PC-3 (cell line): ENCODE measurements at regions of chr20 and their contacts with region 1.

Region 1: DNA sequence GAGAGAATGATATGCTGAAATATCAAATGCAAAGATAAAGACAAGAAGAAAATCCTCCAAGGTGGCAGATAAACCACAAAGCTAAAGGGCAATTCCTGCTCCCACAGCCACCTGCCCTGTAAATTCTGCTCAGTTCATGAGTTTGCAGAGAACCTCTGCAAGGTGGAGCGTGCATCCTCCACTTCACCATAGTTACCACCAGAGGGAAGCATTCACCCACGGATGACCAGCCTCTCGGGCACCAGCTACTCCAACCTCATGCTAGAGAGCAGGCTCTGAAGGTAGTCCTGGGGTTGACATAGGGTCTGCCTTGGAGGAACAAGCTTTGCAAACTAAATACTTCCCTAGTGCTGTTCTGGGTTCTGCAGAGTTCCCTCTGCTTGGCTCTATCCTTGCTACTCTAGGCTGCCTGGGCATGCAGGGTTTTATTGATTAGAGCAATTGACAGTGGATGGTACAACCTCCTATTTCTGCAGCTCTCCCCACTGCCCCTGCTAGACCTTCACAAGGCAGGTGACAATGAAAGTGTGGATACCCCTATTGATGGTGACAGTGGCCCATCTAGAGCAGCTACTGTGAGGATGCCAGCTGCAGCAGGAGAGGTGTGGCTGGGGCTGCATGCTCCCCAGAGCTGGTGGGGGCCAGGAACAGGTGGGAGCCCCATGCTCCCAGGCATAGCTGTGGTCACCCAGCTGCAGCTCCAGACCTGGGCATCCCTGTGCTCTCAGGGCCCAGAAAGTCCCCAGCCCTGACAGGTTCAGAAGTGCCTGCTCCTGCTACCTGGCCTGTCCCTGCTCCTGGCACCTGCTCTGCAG is 51.1 kb downstream of the GGTLC1 start:
- DNase-seq: peak; percentile 86
- ATAC-seq: peak; percentile 91
- H3K4me3 ChIP-seq: no peak overlapping the region
- H3K27ac ChIP-seq: no peak overlapping the region
- H3K4me1 ChIP-seq: no peaks in the 10 kb centered on the region
- H3K27me3 ChIP-seq: peaks cover 37% of the 10 kb centered on the region; the same call in 1 of the 2 replicates
- CTCF ChIP-seq: peak; percentile 93

Region 2: DNA sequence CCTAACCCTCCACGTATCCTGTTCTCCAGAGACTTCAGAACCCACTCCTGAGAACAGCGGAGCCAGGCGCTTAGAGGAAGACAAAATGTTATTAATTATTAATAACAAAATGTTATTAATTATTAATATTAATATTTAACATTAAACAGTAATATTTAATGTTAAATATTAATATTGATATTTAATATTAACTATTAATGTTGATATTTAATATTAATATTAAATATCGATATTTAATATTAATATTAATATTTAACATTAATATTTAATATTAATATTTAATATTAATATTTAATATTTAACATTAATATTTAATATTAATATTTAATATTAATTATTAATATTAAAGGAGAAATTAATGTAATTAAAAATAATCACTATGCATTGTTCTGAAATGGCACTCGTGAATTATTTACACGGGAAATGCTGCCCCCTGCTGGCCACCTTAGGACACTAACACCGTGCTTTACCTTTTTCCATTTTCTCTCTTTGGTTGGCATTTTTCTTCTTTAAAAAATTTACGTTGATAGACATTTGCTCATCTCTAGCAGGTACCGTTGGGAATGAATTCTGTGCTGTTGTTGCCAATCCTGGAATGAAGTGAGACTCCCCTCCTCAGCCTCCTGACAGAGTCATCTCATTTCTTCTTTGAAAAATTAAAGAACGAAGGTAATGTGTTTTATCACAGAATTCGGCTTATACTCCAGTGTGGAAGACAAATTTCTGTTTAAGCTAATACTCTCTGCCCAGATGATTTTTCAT is 58.6 kb after region 1 on chr20:
- CTCF ChIA-PET with region 1: no interaction called
- POLR2A ChIA-PET with region 1: no interaction called
- intact Hi-C with region 1: loop called (anchors 1 kb)
- DNase-seq: peak; percentile 60
- ATAC-seq: no peak
- H3K4me3 ChIP-seq: no peak overlapping the region
- H3K27ac ChIP-seq: no peak overlapping the region
- H3K4me1 ChIP-seq: no peaks in the 10 kb centered on the region
- H3K27me3 ChIP-seq: 0 out of 2 replicates have a peak, but pooled peaks cover 3% of the 10 kb centered on the region
- CTCF ChIP-seq: peak; percentile 73

Region 3: GRCh38 chr20:24100385-24101011 is 163.0 kb after region 1 on chr20:
- CTCF ChIA-PET with region 1: no interaction called
- POLR2A ChIA-PET with region 1: no interaction called
- intact Hi-C with region 1: loop called (anchors 5 kb)
- DNase-seq: peak; percentile 86
- ATAC-seq: peak; percentile 75
- H3K4me3 ChIP-seq: peak overlapping the region; percentile 11; the same call in 1 of the 2 replicates
- H3K27ac ChIP-seq: peak overlapping the region; percentile 17
- H3K4me1 ChIP-seq: peaks cover 92% of the 10 kb centered on the region
- H3K27me3 ChIP-seq: no peaks in the 10 kb centered on the region
- CTCF ChIP-seq: peak; percentile 93

Region 4: GRCh38 chr20:24917797-24918578 is 980.5 kb after region 1 on chr20:
- CTCF ChIA-PET with region 1: no interaction called
- POLR2A ChIA-PET with region 1: no interaction called
- intact Hi-C with region 1: loop called (anchors 5 kb)
- DNase-seq: peak; percentile 80
- ATAC-seq: peak; percentile 98
- H3K4me3 ChIP-seq: no peak overlapping the region
- H3K27ac ChIP-seq: no peak overlapping the region
- H3K4me1 ChIP-seq: no peaks in the 10 kb centered on the region
- H3K27me3 ChIP-seq: peaks cover 35% of the 10 kb centered on the region
- CTCF ChIP-seq: peak; percentile 95